CD14-positive monocyte (primary cell): ENCODE measurements at regions of chr2 and their contacts with region 1.

Region 1: DNA sequence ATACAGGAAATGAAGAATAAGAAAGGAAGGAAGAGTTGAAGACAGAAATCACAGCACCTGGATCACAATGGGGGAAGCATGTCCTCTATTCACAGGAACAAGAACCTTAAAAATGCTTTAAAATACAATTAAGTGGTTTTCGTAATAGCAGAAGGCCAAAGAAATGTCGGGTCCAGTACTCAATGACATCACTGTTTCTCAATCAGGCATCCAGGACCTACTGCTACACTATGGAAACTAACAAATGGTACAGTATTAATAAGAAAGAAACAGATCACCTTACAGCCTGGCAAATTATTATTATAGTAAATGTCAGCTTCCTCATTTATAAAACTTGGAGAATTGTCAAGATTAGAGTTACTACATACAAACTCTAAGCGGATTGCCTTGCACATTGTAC is 15.8 kb downstream of the HNRNPLL start:
- DNase-seq: no peak
- H3K4me3 ChIP-seq: no peak overlapping the region
- H3K4me3 Mint-ChIP-seq: no peak overlapping the region
- H3K27ac ChIP-seq: no peak overlapping the region
- H3K27ac Mint-ChIP-seq: no peak overlapping the region
- H3K4me1 ChIP-seq: no peaks in the 10 kb centered on the region
- H3K4me1 Mint-ChIP-seq: peaks cover 3% of the 10 kb centered on the region
- H3K27me3 ChIP-seq: no peaks in the 10 kb centered on the region
- H3K27me3 Mint-ChIP-seq: no peaks in the 10 kb centered on the region
- CTCF ChIP-seq: no peak

Region 2: GRCh38 chr2:38734299-38735058 is 147.5 kb after region 1 on chr2:
- intact Hi-C with region 1: loop called (anchors 5 kb)
- DNase-seq: no peak
- H3K4me3 ChIP-seq: no peak overlapping the region
- H3K4me3 Mint-ChIP-seq: no peak overlapping the region
- H3K27ac ChIP-seq: no peak overlapping the region
- H3K27ac Mint-ChIP-seq: no peak overlapping the region
- H3K4me1 ChIP-seq: peaks cover 16 to 21% of the 10 kb centered on the region in 2 donors
- H3K4me1 Mint-ChIP-seq: peaks cover 30% of the 10 kb centered on the region
- H3K27me3 ChIP-seq: no peaks in the 10 kb centered on the region
- H3K27me3 Mint-ChIP-seq: no peaks in the 10 kb centered on the region
- CTCF ChIP-seq: no peak